Activated CD8-positive, alpha-beta T cell treated with anti-CD3 and anti-CD28 coated beads, Interleukin-2, amount 10 ng/mL, durations not matched to agents 7 days and 5 days (primary cell): ENCODE measurements at regions of chr7 and their contacts with region 1.

Region 1: DNA sequence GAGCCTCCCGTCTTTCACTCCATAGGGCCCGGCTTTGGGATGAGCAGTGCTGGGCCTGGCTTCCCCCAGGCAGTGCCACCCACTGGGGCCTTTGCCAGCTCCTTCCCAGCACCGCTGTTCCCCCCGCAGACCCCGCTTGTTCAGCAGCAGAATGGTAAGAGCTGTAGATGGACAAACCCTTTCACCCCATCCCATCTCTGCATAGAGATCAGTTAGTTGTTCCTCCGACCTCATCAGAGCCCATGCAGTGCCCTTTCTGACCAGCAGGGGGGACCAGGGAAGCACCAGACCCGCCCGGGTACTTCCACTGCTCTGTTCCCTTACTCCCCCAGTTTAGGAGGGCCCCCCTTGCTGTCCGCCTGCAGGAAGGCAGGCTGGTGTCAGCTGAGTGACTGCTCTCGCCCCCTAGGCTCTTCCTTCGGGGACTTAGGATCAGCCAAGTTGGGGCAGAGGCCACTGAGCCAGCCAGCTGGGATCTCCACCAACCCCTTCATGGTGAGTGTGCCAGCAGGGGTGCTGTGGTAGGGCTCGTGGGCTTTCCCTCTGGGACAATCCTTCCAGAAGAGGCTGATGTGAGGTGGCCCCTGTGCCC is 9.8 kb downstream of the SAP25 start:
- DNase-seq: peak; percentile 89
- ATAC-seq: peak; percentile 67
- H3K4me3 Mint-ChIP-seq: no peak overlapping the region
- H3K27ac Mint-ChIP-seq: peak overlapping the region; percentile 65
- H3K4me1 Mint-ChIP-seq: peaks cover 42% of the 10 kb centered on the region
- H3K27me3 Mint-ChIP-seq: no peaks in the 10 kb centered on the region

Region 2: GRCh38 chr7:100469227-100470044 is 94.5 kb before region 1 on chr7:
- CTCF ChIA-PET with region 1: interaction called, 47 read pairs
- POLR2A ChIA-PET with region 1: interaction called, 5 read pairs
- DNase-seq: peak; percentile 86
- ATAC-seq: peak; percentile 85
- H3K4me3 Mint-ChIP-seq: no peak overlapping the region
- H3K27ac Mint-ChIP-seq: peak overlapping the region; percentile 39
- H3K4me1 Mint-ChIP-seq: peaks cover 21% of the 10 kb centered on the region
- H3K27me3 Mint-ChIP-seq: no peaks in the 10 kb centered on the region

Region 3: DNA sequence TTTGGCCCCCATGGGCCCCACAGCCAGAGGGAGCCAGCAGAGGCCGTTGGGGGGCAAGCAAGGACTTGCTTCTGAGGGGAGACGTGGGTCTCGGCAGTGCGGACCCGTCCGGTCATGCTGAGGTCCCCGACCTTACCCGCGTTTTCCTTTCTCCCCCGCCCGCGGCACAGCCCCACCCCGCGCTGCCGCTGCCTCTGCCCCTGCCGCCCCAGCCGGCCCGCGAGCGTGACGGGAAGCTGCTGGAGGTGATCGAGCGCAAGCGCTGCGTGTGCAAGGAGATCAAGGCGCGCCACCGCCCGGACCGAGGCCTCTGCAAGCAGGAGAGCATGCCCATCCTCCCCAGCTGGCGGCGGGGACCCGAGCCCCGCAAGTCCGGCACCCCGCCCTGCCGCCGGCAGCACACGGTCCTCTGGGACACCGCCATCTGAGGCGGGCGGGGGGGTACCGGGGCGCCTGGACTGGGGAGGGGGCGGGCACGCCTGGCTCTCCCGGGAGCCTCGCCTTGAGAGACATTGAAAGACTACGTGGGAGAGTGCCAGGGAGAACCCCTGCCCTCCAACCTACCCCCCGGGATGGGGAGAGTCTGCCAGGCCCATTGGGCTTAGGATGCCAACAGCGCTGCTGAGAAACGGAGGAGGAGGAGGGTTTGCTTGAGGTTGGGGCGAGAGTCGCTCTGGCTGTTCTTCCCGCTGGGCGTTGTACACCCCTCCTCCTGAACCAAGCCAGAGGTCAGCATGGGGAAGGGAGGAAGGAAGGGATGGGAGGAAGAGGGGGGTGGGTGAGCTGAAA is 70.2 kb before region 1 on chr7:
- CTCF ChIA-PET with region 1: interaction called, 14 read pairs
- POLR2A ChIA-PET with region 1: interaction called, 4 read pairs
- DNase-seq: peak; percentile 73
- ATAC-seq: peak; percentile 84
- H3K4me3 Mint-ChIP-seq: peak overlapping the region; percentile 48
- H3K27ac Mint-ChIP-seq: peak overlapping the region; percentile 43
- H3K4me1 Mint-ChIP-seq: peaks cover 14% of the 10 kb centered on the region
- H3K27me3 Mint-ChIP-seq: peaks cover 9% of the 10 kb centered on the region

Region 4: DNA sequence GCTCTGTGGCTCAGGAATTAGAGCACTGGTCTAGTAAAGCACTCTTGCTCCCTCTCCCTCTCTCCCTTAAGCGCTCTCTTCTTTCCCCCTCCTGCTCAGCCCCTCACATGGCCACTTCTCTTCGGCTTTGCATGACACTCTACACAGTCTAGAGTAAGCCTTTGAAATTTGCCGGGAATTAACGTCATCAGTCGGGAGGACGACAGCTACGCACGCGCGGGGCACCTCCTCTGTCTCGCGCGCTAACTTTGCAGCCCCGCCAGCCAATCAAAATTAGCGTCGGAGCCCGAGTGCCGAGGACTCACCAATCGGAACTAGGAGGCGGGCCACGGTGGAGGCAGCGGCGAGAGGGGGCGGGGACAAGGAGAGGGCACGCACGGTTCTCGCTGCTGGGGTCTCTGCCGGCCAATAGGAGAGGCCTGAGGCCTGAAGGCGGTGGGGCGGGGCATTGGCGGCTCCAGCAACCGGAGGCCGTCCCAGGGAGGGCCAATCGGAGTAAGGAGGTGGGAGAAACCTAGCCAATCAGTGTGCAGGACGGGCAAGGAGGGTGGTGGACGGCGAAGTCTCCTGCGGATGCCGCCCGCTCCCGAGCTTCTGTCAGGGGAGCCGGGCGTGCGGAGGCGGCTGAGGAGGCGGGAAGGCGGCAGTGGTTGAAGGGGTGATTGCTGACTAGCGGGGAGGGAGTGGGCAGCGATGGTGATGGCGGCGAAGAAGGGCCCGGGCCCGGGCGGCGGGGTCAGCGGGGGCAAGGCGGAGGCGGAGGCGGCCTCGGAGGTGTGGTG is 25.1 kb before region 1 on chr7 and contains the start of gene AGFG2:
- CTCF ChIA-PET with region 1: interaction called, 213 read pairs
- POLR2A ChIA-PET with region 1: interaction called, 3 read pairs
- DNase-seq: peak; percentile 100
- ATAC-seq: peak; percentile 96
- H3K4me3 Mint-ChIP-seq: peak within 1 kb of the TSS; percentile 100
- H3K27ac Mint-ChIP-seq: peak within 1 kb of the TSS; percentile 87
- H3K4me1 Mint-ChIP-seq: peaks cover 53% of the 10 kb centered on the region
- H3K27me3 Mint-ChIP-seq: no peaks in the 10 kb centered on the region
- total RNA-seq, gene AGFG2: 43.0 to 46.0 TPM

Region 5: GRCh38 chr7:100553864-100554263 is 10.0 kb before region 1 on chr7:
- CTCF ChIA-PET with region 1: interaction called, 213 read pairs
- POLR2A ChIA-PET with region 1: interaction called, 3 read pairs
- DNase-seq: no peak
- ATAC-seq: no peak
- H3K4me3 Mint-ChIP-seq: no peak overlapping the region
- H3K27ac Mint-ChIP-seq: no peak overlapping the region
- H3K4me1 Mint-ChIP-seq: peaks cover 22% of the 10 kb centered on the region
- H3K27me3 Mint-ChIP-seq: no peaks in the 10 kb centered on the region

Region 6: GRCh38 chr7:100621554-100621953 is 57.6 kb after region 1 on chr7:
- CTCF ChIA-PET with region 1: no interaction called
- POLR2A ChIA-PET with region 1: no interaction called
- DNase-seq: no peak
- ATAC-seq: no peak
- H3K4me3 Mint-ChIP-seq: no peak overlapping the region
- H3K27ac Mint-ChIP-seq: peak overlapping the region; percentile 2
- H3K4me1 Mint-ChIP-seq: peaks cover 30% of the 10 kb centered on the region
- H3K27me3 Mint-ChIP-seq: no peaks in the 10 kb centered on the region

Region 7: GRCh38 chr7:100673300-100673941 is 109.5 kb after region 1 on chr7 and contains the start of gene GNB2:
- CTCF ChIA-PET with region 1: no interaction called
- POLR2A ChIA-PET with region 1: no interaction called
- DNase-seq: peak; percentile 99
- ATAC-seq: peak; percentile 69
- H3K4me3 Mint-ChIP-seq: peak within 1 kb of the TSS; percentile 96
- H3K27ac Mint-ChIP-seq: peak within 1 kb of the TSS; percentile 96
- H3K4me1 Mint-ChIP-seq: peaks cover 26% of the 10 kb centered on the region
- H3K27me3 Mint-ChIP-seq: peaks cover 10% of the 10 kb centered on the region
- total RNA-seq, gene GNB2: 274 to 286 TPM

Region 8: DNA sequence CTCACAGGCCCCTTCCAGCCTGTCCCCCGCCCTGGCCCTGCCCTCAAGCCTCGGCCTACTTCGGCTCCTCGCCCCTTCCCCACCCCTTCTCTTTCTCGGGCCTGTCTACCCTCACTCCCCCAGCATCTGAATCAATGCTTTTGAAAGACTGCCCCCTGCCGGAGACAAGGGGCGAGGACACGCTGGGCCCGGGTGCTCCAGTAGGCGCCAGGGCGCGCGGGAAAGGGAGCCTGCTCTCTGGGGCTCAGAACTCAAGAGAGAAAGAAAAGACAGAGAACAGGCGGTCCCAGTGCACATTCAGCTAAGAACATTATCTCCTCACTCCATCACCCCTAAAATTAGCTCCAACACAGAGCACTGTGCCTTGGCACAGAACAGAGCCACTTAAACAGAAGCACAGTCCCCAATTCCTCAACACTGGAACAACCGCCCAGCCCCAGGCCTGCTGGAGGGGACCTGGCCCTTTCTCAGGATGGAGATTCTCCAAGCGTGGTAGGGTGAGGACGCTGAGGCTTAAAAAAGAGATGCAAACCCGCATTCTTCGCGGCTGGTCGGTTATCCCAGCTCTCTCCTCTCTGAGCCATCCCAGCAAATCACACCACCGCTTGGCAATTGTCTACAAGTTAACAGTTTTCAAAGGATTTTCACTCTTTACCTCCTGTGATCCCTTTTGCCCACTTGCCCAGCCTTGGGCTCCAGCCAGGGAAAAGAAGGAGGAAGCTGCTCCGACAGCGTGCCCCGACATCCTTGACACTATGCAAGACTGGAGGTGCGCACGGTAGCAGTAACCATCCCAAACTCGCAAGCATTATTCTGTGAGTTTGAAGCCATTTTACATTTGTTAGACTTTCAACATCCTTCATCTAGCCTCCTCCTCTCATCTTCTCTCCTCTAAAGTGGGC is 128.0 kb after region 1 on chr7:
- CTCF ChIA-PET with region 1: interaction called, 11 read pairs
- POLR2A ChIA-PET with region 1: no interaction called
- DNase-seq: peak; percentile 88
- ATAC-seq: peak; percentile 78
- H3K4me3 Mint-ChIP-seq: peak overlapping the region; percentile 94
- H3K27ac Mint-ChIP-seq: peak overlapping the region; percentile 65
- H3K4me1 Mint-ChIP-seq: peaks cover 37% of the 10 kb centered on the region
- H3K27me3 Mint-ChIP-seq: peaks cover 9% of the 10 kb centered on the region

Region 9: GRCh38 chr7:100812741-100813478 is 249.0 kb after region 1 on chr7:
- CTCF ChIA-PET with region 1: no interaction called
- POLR2A ChIA-PET with region 1: no interaction called
- DNase-seq: no peak
- ATAC-seq: no peak
- H3K4me3 Mint-ChIP-seq: no peak overlapping the region
- H3K27ac Mint-ChIP-seq: no peak overlapping the region
- H3K4me1 Mint-ChIP-seq: no peaks in the 10 kb centered on the region
- H3K27me3 Mint-ChIP-seq: no peaks in the 10 kb centered on the region